Activated B cell treated with CpG ODN at 0.5 μM for 24 hours (primary cell): ENCODE measurements at regions of chr3 and their contacts with region 1.

Region 1: GRCh38 chr3:110314512-110315114 is 757.0 kb upstream of the NECTIN3 start:
- DNase-seq: no peak
- ATAC-seq: peak; percentile 71
- H3K4me3 Mint-ChIP-seq: no peak overlapping the region
- H3K27ac Mint-ChIP-seq: no peak overlapping the region
- H3K4me1 Mint-ChIP-seq: no peaks in the 10 kb centered on the region
- H3K27me3 Mint-ChIP-seq: no peaks in the 10 kb centered on the region
- CTCF ChIP-seq: peak; percentile 78

Region 2: GRCh38 chr3:108489771-108490170 is 1824.8 kb before region 1 on chr3:
- CTCF ChIA-PET with region 1: no interaction called
- POLR2A ChIA-PET with region 1: no interaction called
- intact Hi-C with region 1: loop called (anchors 2 kb)
- DNase-seq: no peak
- ATAC-seq: peak; percentile 72
- H3K4me3 Mint-ChIP-seq: no peak overlapping the region
- H3K27ac Mint-ChIP-seq: no peak overlapping the region
- H3K4me1 Mint-ChIP-seq: no peaks in the 10 kb centered on the region
- H3K27me3 Mint-ChIP-seq: peaks cover 5% of the 10 kb centered on the region
- CTCF ChIP-seq: peak; percentile 29

Region 3: DNA sequence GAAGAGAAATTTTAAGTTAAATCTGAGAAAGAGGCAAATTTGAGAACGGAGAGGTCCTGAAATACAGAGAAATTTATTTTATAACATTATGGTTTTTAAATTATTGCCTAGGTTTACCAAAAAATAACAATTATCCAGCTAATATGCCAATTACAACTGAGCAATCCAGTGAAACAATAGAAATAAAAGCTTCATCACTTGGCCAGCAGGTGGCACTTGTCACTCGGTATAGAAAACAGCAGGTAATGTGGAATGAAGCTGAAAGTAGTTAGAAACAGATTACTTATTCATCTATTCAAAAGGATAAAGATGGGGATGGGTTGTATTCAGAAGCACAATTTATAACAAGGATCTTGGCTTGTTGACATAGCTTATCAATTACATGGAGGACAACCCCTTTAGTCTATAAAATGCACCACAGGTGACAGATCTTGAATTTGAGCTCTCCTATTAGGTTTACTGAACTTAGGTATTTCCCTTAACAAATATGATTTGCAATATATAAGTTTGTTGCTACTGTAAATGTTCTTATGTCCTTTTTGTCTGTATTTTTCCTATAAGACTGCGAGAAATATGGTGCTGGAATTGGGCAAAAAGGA is 1290.9 kb before region 1 on chr3:
- CTCF ChIA-PET with region 1: interaction called, 11 read pairs
- POLR2A ChIA-PET with region 1: no interaction called
- intact Hi-C with region 1: loop called (anchors 2 kb)
- DNase-seq: no peak
- ATAC-seq: peak; percentile 57
- H3K4me3 Mint-ChIP-seq: no peak overlapping the region
- H3K27ac Mint-ChIP-seq: no peak overlapping the region
- H3K4me1 Mint-ChIP-seq: no peaks in the 10 kb centered on the region
- H3K27me3 Mint-ChIP-seq: peaks cover 3% of the 10 kb centered on the region
- CTCF ChIP-seq: no peak

Region 4: DNA sequence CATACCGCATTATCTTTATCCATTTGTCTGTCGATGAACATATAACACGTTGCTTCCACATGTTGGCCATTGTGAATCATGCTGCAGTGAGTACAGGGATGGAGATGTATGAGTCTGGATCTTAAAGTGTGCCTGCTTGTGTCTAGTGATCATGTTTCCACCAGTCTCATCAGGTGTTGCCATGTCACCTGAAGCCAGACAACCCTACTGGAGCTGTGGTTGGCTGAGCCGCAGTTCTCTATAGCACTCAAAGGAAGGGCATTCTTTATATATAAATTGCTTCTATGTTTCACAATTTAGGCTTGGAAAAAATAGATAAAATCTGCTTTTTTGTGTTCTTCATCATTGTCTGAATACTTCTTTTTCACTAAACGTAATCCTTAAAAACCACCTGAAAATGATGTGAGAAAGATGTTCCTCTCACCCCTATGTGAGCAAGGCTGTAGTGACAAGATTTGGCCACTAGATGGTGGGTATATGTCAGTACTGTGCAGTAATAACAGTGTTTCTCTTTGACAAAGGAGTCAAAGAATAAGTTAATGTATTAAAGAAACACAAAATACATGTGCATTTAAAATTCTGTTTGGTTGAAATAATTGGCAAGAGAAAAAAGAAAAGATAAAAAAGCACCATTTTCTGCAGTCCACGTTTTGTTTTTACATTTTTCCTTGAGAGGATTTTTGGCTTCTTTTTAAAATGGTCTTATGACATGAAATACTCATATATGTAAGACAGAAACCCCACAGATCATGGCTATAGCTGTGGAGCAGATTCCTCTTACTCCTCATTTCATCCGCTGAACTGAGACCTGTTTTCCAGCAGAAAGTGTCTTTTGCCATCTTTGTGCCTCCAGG is 582.8 kb before region 1 on chr3:
- CTCF ChIA-PET with region 1: no interaction called
- POLR2A ChIA-PET with region 1: no interaction called
- intact Hi-C with region 1: loop called (anchors 2 kb)
- DNase-seq: no peak
- ATAC-seq: peak; percentile 62
- H3K4me3 Mint-ChIP-seq: no peak overlapping the region
- H3K27ac Mint-ChIP-seq: no peak overlapping the region
- H3K4me1 Mint-ChIP-seq: no peaks in the 10 kb centered on the region
- H3K27me3 Mint-ChIP-seq: no peaks in the 10 kb centered on the region
- CTCF ChIP-seq: no peak

Region 5: DNA sequence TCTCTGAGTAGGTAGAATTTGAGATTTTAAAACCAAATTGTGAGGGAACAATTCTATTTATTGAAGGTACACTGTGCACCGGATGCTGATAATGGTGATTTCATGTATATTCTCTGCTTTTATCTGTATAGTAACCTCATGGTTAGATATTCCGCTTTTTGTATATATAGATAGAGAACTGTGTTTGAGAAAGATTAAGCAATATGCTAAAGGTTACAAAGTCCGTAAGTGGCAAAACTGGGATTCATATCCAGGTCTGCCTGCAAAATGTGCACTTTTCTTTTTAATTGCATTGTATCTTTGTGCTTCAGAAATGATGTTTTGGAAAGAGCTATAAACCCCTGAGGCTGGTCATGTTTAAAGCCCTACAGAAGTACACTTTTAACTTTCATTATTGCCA is 121.6 kb after region 1 on chr3:
- CTCF ChIA-PET with region 1: no interaction called
- POLR2A ChIA-PET with region 1: no interaction called
- intact Hi-C with region 1: no loop called
- DNase-seq: no peak
- ATAC-seq: no peak
- H3K4me3 Mint-ChIP-seq: no peak overlapping the region
- H3K27ac Mint-ChIP-seq: no peak overlapping the region
- H3K4me1 Mint-ChIP-seq: no peaks in the 10 kb centered on the region
- H3K27me3 Mint-ChIP-seq: no peaks in the 10 kb centered on the region
- CTCF ChIP-seq: no peak

Region 6: DNA sequence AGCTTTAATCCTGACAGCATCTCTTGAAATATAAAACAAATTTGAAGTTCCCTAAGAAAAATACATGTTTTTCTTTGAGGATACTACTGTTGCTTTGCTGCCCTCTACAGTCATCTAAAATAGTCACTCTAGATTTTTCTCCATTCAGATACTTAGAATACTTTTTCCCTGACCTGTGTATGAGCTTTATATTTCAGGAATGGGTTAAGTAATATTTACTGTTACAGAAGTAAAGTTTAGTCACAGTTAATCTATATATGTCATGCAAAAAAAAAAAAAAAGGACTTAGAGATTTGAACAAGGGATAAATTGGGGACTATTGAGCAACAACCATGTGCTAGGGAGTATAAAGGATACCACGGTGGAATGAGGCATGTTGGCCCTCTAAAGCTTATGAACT is 765.8 kb after region 1 on chr3:
- CTCF ChIA-PET with region 1: interaction called, 4 read pairs
- POLR2A ChIA-PET with region 1: no interaction called
- intact Hi-C with region 1: loop called (anchors 2 kb)
- DNase-seq: no peak
- ATAC-seq: no peak
- H3K4me3 Mint-ChIP-seq: no peak overlapping the region
- H3K27ac Mint-ChIP-seq: no peak overlapping the region
- H3K4me1 Mint-ChIP-seq: no peaks in the 10 kb centered on the region
- H3K27me3 Mint-ChIP-seq: peaks cover 9% of the 10 kb centered on the region
- CTCF ChIP-seq: no peak

Region 7: GRCh38 chr3:111210003-111210711 is 895.5 kb after region 1 on chr3:
- CTCF ChIA-PET with region 1: no interaction called
- POLR2A ChIA-PET with region 1: no interaction called
- intact Hi-C with region 1: no loop called
- DNase-seq: no peak
- ATAC-seq: no peak
- H3K4me3 Mint-ChIP-seq: no peak overlapping the region
- H3K27ac Mint-ChIP-seq: no peak overlapping the region
- H3K4me1 Mint-ChIP-seq: no peaks in the 10 kb centered on the region
- H3K27me3 Mint-ChIP-seq: no peaks in the 10 kb centered on the region
- CTCF ChIP-seq: no peak